ENCODE measurements at regions of chr10 and their contacts with region 1.

Region 1: DNA sequence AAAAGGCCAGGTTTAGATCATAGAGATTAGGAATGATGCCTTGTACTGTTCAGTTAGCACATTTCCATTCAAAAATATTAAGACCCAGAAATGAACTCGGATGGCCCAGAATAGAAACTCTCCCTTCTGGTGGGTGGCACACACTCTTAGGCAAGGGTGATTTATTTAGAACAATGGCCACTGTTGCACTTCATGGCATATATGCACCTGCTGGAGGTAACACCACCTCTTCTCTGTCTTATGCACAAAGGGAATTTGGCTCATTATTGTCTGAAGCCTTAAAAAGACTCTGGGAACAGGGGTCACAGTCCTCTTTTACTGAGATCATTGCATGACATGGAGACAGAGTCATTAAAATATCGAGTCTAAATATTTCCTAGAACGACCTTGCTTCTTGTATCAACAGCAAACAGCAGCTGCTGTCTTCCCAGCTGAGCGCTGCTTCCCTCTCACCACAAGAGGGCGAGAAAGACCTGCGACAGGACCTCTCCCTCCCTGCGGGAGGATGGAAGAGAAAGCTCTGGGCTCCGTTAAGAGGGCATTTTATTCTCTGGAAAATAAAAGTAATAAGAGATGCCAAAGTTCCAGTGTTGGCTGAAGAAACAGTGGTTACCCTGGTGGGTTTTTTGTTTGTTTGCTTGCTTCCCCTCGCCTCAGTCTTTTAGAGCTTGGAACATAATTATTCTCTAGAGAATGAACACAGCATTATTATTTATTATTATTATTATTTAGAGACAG is 13.6 kb upstream of the BAMBI start:
- DNase-seq: peak; percentile 74 to 83
- H3K4me3 ChIP-seq: no peak overlapping the region
- H3K27ac ChIP-seq: no peak overlapping the region
- H3K4me1 ChIP-seq: peaks cover 0 to 7% of the 10 kb centered on the region in 2 donors
- H3K27me3 ChIP-seq: no peaks in the 10 kb centered on the region
- CTCF ChIP-seq: peak; percentile 82 to 95 (median 90)
- POLR2A ChIP-seq: no peak

Region 2: DNA sequence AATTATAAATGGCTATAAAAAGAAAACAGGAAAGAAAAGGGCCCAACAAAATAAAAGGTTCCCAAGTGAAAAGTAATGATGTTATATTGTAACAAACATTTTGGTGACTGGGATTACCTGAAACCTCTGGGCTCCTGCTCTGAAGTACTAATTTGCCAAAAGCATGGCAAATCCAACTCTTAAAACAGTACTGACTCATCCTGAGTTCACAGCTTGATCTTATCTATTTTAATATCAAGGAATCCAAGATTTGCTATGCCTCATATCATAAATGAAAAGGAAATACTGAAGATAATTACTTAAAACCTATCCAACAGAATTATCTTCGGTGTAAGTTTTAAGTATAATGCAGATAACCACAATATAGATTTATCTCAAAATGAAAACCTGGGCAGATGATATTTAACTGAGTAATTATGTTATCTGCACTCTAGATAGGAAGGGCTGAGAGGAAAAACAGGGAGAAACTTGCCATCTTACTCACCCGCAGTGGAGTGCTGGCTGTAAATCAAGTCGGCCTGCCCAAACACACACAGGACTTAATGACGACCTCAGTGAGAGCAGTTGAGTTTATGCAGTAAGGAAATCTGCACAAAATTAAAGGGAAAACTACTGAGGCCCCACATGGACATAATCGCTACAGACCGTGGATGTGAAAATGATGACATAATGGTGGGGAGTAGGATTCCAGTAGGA is 409.3 kb before region 1 on chr10:
- intact Hi-C with region 1: no loop called
- DNase-seq: peak; percentile 68 to 79
- H3K4me3 ChIP-seq: no peak overlapping the region
- H3K27ac ChIP-seq: peak overlapping the region in 2 of 3 donors; percentile 8 to 52
- H3K4me1 ChIP-seq: peaks cover 0 to 12% of the 10 kb centered on the region in 2 donors
- H3K27me3 ChIP-seq: no peaks in the 10 kb centered on the region
- CTCF ChIP-seq: no peak
- POLR2A ChIP-seq: no peak

Region 3: GRCh38 chr10:28991326-28992270 is 327.9 kb after region 1 on chr10:
- intact Hi-C with region 1: loop called (anchors 10 kb)
- DNase-seq: peak; percentile 18 to 41
- H3K4me3 ChIP-seq: no peak overlapping the region
- H3K27ac ChIP-seq: no peak overlapping the region
- H3K4me1 ChIP-seq: no peaks in the 10 kb centered on the region
- H3K27me3 ChIP-seq: no peaks in the 10 kb centered on the region
- CTCF ChIP-seq: peak in 5 of 6 experiments; percentile 14 to 54 (median 31)
- POLR2A ChIP-seq: no peak

Measured in thyroid gland (tissue), 4 donors.